Activated T-helper 1 cell treated with anti-CD3 and anti-CD28 coated beads, Interleukin-12 subunit alpha, Interleukin-12 subunit beta, Interleukin-2, Interleukin-4 antibody, amounts not matched to agents 30 ng/mL and 10 ng/mL and 1 ng/mL, durations not matched to agents 14 hours and 24 hours and 36 hours (primary cell): ENCODE measurements at regions of chr5 and their contacts with region 1.

Region 1: GRCh38 chr5:58294598-58295305 is 165.1 kb downstream of the PLK2 start:
- DNase-seq: no peak
- H3K4me3 Mint-ChIP-seq: no peak overlapping the region
- H3K27ac Mint-ChIP-seq: no peak overlapping the region
- H3K4me1 Mint-ChIP-seq: peaks cover 8% of the 10 kb centered on the region
- H3K27me3 Mint-ChIP-seq: no peaks in the 10 kb centered on the region

Region 2: DNA sequence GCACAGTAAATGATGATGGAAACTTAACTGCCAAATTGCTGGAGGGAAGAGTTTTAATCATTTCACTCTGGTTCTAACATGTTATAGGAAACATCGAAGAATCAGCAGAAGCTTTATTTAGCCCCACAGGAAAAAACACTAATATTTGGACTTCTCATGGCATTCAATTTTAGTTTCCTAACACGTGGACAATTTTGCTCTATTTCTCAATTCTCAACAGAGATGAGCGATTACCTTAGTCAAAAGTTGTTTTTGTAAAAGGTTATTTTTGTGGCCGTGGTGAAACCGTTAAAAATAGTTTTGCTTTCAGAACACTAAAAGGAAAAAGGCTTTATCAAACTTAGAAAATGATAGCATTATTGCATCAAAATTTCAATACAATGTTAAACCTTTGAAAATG is 70.1 kb before region 1 on chr5:
- intact Hi-C with region 1: no loop called
- DNase-seq: no peak
- H3K4me3 Mint-ChIP-seq: no peak overlapping the region
- H3K27ac Mint-ChIP-seq: no peak overlapping the region
- H3K4me1 Mint-ChIP-seq: no peaks in the 10 kb centered on the region
- H3K27me3 Mint-ChIP-seq: peaks cover 2% of the 10 kb centered on the region

Region 3: DNA sequence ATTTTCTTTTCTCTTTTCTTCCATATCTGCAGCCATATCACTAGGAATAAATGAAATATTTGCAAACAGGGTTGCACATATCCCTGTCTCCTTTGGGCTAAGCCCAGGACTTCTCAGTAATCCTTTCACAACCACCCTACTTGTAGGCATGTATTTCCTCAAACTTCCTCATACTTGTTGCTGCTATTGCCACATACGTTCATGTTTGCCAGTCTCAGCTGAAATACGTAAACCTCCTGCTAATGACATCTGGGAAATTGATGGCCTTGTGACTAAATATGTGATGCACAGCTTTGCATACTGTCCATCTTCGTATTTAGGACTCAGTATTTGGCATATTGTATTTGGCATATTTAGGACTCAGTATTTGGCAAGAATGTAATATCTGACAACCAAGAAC is 59.5 kb before region 1 on chr5:
- intact Hi-C with region 1: no loop called
- DNase-seq: no peak
- H3K4me3 Mint-ChIP-seq: no peak overlapping the region
- H3K27ac Mint-ChIP-seq: no peak overlapping the region
- H3K4me1 Mint-ChIP-seq: no peaks in the 10 kb centered on the region
- H3K27me3 Mint-ChIP-seq: no peaks in the 10 kb centered on the region

Region 4: GRCh38 chr5:58259685-58260152 is 35.0 kb before region 1 on chr5:
- intact Hi-C with region 1: loop called (anchors 1 kb)
- DNase-seq: no peak
- H3K4me3 Mint-ChIP-seq: no peak overlapping the region
- H3K27ac Mint-ChIP-seq: no peak overlapping the region
- H3K4me1 Mint-ChIP-seq: no peaks in the 10 kb centered on the region
- H3K27me3 Mint-ChIP-seq: no peaks in the 10 kb centered on the region